Activated CD4-positive, alpha-beta memory T cell treated with anti-CD3 and anti-CD28 coated beads, Interleukin-2, amount 10 ng/mL, durations not matched to agents 7 days and 5 days (primary cell): ENCODE measurements at regions of chr1 and their contacts with region 1.

Region 1: DNA sequence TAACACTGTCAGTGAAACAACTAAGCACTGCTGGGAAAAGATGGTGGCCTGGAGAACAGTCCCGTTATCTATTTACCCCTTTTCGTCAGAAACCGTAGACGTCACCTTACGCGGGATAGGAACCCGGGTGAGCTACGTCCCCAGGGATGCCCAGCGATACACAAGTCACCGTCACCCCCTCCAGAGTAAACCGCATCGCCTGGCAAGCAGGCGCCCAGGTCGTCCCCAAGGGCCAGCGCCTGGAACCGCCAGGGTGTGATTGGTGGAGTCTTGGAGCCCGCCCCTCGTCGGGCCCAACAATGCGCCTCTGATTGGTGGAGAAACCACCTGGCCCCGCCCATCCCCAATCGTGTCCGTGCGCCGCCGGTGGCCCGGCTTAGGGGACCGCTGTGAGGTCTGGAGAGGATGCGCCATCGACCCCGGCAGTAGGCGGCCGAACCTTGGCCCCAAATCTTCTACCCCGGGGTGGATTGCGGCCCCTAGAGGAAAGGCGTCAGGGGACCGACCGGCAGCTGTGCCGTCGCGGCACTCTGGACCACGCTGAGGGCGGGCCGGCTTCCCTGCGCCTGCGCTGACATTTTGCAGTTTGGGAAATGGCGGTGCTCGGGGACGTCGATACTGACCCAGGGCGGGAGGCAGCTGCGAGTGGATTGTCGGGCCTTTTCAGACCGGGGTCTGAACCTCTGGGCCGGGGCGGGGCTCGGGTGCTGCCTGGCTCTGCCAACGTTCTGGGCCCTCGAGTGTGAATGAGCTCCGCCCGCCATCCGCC is 34.4 kb downstream of the SLC2A1 start:
- DNase-seq: peak; percentile 93
- H3K4me3 Mint-ChIP-seq: peak overlapping the region; percentile 73
- H3K27ac Mint-ChIP-seq: peak overlapping the region; percentile 84
- H3K4me1 Mint-ChIP-seq: peaks cover 60% of the 10 kb centered on the region
- H3K27me3 Mint-ChIP-seq: no peaks in the 10 kb centered on the region

Region 2: GRCh38 chr1:42046761-42047507 is 877.3 kb before region 1 on chr1:
- CTCF ChIA-PET with region 1: no interaction called
- POLR2A ChIA-PET with region 1: no interaction called
- DNase-seq: no peak
- H3K4me3 Mint-ChIP-seq: no peak overlapping the region
- H3K27ac Mint-ChIP-seq: no peak overlapping the region
- H3K4me1 Mint-ChIP-seq: no peaks in the 10 kb centered on the region
- H3K27me3 Mint-ChIP-seq: peaks cover 21% of the 10 kb centered on the region

Region 3: GRCh38 chr1:42913426-42914091 is 10.7 kb before region 1 on chr1:
- CTCF ChIA-PET with region 1: interaction called, 45 read pairs
- POLR2A ChIA-PET with region 1: interaction called, 10 read pairs
- DNase-seq: peak; percentile 62
- H3K4me3 Mint-ChIP-seq: no peak overlapping the region
- H3K27ac Mint-ChIP-seq: no peak overlapping the region
- H3K4me1 Mint-ChIP-seq: peaks cover 16% of the 10 kb centered on the region
- H3K27me3 Mint-ChIP-seq: peaks cover 9% of the 10 kb centered on the region

Region 4: GRCh38 chr1:42936309-42937078 is 12.2 kb after region 1 on chr1:
- CTCF ChIA-PET with region 1: interaction called, 14 read pairs
- POLR2A ChIA-PET with region 1: interaction called, 61 read pairs
- DNase-seq: peak; percentile 59
- H3K4me3 Mint-ChIP-seq: peak overlapping the region; percentile 52
- H3K27ac Mint-ChIP-seq: peak overlapping the region; percentile 94
- H3K4me1 Mint-ChIP-seq: peaks cover 99% of the 10 kb centered on the region
- H3K27me3 Mint-ChIP-seq: no peaks in the 10 kb centered on the region

Region 5: DNA sequence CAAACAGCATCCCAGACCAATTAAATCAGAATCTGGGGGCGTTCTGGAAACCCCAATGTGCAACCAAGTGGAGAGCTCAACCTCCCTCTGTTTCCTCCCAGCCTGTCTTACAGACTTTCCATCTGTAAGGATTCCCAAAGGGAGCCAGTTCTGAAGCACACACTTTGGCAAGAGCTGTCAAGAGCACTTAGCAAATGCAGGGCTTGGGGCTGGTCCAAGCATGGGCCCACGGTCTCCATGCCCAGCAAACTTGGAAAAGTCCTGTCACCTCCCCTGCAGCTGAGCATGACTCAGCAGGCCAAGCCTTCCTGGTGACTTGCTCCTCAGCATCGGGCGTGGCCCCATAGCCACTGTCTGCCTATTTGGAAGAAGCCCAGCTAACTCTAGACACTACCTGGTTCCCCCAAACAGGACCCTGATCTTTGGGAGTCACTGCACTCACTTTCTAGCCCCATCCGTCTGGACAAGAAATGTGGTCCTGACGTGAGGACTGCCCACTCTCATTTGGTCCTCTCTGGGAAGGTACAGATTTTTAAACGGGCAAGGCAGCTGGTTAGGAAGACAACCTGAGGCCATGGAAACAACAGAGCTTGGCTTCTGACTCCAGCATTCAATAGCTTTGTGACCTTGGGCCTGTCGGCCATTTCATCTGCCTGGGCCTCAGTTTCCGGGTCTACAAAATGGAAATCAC is 17.5 kb after region 1 on chr1:
- CTCF ChIA-PET with region 1: interaction called, 8 read pairs
- POLR2A ChIA-PET with region 1: interaction called, 61 read pairs
- DNase-seq: peak; percentile 59
- H3K4me3 Mint-ChIP-seq: peak overlapping the region; percentile 50
- H3K27ac Mint-ChIP-seq: peak overlapping the region; percentile 94
- H3K4me1 Mint-ChIP-seq: peaks cover 99% of the 10 kb centered on the region
- H3K27me3 Mint-ChIP-seq: no peaks in the 10 kb centered on the region

Region 6: GRCh38 chr1:42952303-42953001 is 28.2 kb after region 1 on chr1:
- CTCF ChIA-PET with region 1: interaction called, 24 read pairs
- POLR2A ChIA-PET with region 1: interaction called, 72 read pairs
- DNase-seq: peak; percentile 57
- H3K4me3 Mint-ChIP-seq: peak overlapping the region; percentile 40
- H3K27ac Mint-ChIP-seq: peak overlapping the region; percentile 87
- H3K4me1 Mint-ChIP-seq: peaks cover 86% of the 10 kb centered on the region
- H3K27me3 Mint-ChIP-seq: no peaks in the 10 kb centered on the region

Region 7: DNA sequence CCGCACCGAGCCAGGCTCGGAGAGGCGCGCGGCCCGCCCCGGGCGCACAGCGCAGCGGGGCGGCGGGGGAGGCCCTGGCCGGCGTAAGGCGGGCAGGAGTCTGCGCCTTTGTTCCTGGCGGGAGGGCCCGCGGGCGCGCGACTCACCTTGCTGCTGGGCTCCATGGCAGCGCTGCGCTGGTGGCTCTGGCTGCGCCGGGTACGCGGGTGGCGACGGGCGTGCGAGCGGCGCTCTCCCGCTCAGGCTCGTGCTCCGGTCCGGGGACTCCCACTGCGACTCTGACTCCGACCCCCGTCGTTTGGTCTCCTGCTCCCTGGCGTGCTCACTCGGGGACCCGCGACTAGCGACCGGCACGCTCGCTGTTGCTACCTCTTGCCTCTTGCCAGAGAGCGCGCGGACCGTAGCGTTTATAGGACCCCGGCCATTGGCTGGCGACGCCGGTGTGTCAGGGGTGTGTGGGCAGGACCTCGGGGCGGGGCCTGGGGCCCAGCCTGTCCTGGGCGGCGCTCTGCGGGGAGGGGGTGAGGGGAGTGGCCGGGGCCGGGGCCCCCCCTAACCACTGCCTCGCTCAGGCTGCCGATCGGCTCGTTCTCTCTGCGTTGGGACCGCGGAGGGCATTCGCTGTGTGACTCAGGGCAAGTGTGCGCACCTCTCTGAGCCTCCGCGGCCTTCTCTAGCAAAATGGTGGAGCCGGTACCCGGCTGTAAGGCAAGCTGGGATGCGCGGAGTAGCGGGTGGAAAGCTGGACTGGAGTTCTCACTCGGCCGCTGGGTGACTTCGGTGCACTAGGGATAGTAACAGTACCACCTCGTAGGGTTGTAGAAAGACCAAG is 34.4 kb after region 1 on chr1 and contains the start of gene SLC2A1:
- CTCF ChIA-PET with region 1: interaction called, 30 read pairs
- POLR2A ChIA-PET with region 1: interaction called, 72 read pairs
- DNase-seq: peak; percentile 96
- H3K4me3 Mint-ChIP-seq: peak within 1 kb of the TSS; percentile 99
- H3K27ac Mint-ChIP-seq: peak within 1 kb of the TSS; percentile 100
- H3K4me1 Mint-ChIP-seq: peaks cover 63% of the 10 kb centered on the region
- H3K27me3 Mint-ChIP-seq: peaks cover 12% of the 10 kb centered on the region
- total RNA-seq, gene SLC2A1: 153 TPM

Region 8: GRCh38 chr1:42983253-42983652 is 59.0 kb after region 1 on chr1:
- CTCF ChIA-PET with region 1: no interaction called
- POLR2A ChIA-PET with region 1: no interaction called
- DNase-seq: no peak
- H3K4me3 Mint-ChIP-seq: no peak overlapping the region
- H3K27ac Mint-ChIP-seq: no peak overlapping the region
- H3K4me1 Mint-ChIP-seq: no peaks in the 10 kb centered on the region
- H3K27me3 Mint-ChIP-seq: peaks cover 4% of the 10 kb centered on the region